ENCODE measurements at regions of chr1 and their contacts with region 1.

Region 1: DNA sequence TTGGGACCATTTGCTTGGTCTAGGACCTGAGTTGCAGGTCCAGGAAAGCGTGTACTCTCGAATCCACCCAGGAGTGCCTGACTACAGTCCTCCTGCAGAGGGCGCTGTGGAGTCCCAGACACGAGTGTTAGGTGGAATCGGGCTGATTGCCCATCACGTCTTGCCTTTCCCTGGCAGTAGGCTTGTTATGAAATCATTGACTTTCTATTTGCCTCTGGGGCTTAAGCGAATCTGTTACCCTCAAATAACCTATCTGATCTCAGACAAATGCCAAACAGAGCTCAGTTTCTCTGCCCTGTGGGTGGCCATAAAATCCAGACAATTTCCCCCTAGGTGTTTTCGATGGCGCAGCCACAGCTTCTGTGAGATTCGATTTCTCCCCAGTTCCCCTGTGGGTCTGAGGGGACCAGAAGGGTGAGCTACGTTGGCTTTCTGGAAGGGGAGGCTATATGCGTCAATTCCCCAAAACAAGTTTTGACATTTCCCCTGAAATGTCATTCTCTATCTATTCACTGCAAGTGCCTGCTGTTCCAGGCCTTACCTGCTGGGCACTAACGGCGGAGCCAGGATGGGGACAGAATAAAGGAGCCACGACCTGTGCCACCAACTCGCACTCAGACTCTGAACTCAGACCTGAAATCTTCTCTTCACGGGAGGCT is at the start of gene IL20:
- DNase-seq: peak; percentile 83
- H3K4me3 ChIP-seq: no peak within 1 kb of the TSS
- H3K27ac ChIP-seq: no peak within 1 kb of the TSS
- H3K4me1 ChIP-seq: no peaks in the 10 kb centered on the region
- H3K27me3 ChIP-seq: no peaks in the 10 kb centered on the region
- CTCF ChIP-seq: peak; percentile 89
- total RNA-seq, gene IL20: not detected

Region 2: GRCh38 chr1:206935491-206936067 is 70.4 kb after region 1 on chr1:
- intact Hi-C with region 1: no loop called
- DNase-seq: no peak
- H3K4me3 ChIP-seq: no peak overlapping the region
- H3K27ac ChIP-seq: peak overlapping the region; percentile 28
- H3K4me1 ChIP-seq: no peaks in the 10 kb centered on the region
- H3K27me3 ChIP-seq: no peaks in the 10 kb centered on the region
- CTCF ChIP-seq: peak; percentile 36

Region 3: GRCh38 chr1:206992790-206993189 is 127.6 kb after region 1 on chr1:
- intact Hi-C with region 1: loop called (anchors 5 kb)
- DNase-seq: no peak
- H3K4me3 ChIP-seq: no peak overlapping the region
- H3K27ac ChIP-seq: no peak overlapping the region
- H3K4me1 ChIP-seq: no peaks in the 10 kb centered on the region
- H3K27me3 ChIP-seq: no peaks in the 10 kb centered on the region
- CTCF ChIP-seq: no peak